ENCODE measurements at regions of chr14 and their contacts with region 1.

Region 1: DNA sequence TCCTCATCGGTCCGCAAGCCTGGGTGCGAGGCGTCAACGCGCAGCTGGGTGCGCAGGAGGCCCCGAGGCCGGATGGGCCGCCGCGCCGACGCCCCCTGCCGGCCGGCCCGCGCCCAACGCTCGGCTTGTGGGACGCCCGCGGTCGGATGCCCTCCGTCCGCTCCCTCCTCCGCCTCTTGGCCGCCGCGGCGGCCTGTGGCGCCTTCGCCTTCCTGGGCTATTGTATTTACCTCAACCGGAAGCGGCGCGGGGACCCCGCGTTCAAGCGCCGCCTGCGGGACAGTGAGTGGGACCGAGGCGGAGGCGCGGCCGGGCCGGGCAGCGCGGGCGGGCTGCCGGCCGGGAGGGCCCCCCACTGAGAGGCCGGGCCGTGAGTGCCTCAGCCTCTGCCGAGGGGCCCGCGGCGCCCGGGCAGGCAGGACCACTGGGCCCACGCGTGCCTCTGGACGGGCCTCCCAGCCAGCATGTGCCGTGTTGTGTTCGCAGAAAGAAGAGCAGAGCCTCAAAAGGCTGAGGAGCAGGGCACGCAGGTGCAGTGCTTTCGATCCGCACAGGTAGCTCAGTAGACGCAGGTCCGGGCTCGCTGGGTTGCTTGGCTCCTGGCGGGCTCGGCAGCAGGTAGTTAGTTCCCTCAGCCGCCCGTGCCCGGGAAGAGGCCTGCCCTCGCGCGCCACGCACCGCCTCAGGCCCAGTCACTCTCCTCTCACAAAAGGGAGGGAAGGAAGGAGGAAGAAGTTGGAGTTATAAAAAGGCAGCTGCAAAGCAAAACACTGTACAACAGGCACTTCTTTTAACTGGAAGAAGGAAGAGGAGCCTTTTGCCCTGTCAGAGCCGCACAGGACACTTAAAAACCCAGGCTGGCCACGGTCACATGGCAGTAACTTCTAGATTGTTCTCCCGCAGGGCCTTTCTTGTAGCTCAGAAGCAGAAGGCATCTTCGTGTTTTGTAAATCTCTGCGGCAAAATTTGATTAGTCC is at the start of gene TOMM20L:
- DNase-seq: peak; percentile 79
- ATAC-seq: peak; percentile 95
- H3K4me3 Mint-ChIP-seq: peak within 1 kb of the TSS; percentile 67
- H3K27ac Mint-ChIP-seq: peak within 1 kb of the TSS; percentile 53
- H3K4me1 Mint-ChIP-seq: peaks cover 8% of the 10 kb centered on the region
- H3K27me3 Mint-ChIP-seq: no peaks in the 10 kb centered on the region
- total RNA-seq, gene TOMM20L: not detected

Region 2: DNA sequence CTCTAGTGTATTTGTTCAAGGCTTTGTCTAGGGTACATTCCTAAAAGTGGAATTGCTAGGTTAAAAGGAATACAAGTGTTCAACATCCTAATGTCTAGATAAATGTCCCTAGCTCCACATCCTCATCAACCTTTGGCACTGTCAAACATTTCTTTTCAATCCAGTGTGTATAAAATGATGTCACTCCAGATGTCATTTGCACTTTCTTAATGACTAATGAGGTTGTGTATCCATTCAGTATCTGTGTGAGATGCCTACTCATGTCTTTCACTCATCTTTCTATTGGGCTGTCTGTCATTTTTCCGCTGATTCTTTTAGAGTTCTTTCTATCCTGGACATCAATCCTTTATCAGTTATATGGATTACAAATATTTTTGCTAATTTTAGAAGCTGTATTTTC is 287.4 kb before region 1 on chr14:
- CTCF ChIA-PET with region 1: interaction called, 10 read pairs
- DNase-seq: no peak
- ATAC-seq: no peak
- H3K4me3 Mint-ChIP-seq: no peak overlapping the region
- H3K27ac Mint-ChIP-seq: no peak overlapping the region
- H3K4me1 Mint-ChIP-seq: peaks cover 5% of the 10 kb centered on the region
- H3K27me3 Mint-ChIP-seq: peaks cover 39% of the 10 kb centered on the region

Region 3: GRCh38 chr14:58408681-58409215 is 12.6 kb after region 1 on chr14:
- CTCF ChIA-PET with region 1: interaction called, 35 read pairs
- DNase-seq: no peak
- ATAC-seq: no peak
- H3K4me3 Mint-ChIP-seq: no peak overlapping the region
- H3K27ac Mint-ChIP-seq: no peak overlapping the region
- H3K4me1 Mint-ChIP-seq: no peaks in the 10 kb centered on the region
- H3K27me3 Mint-ChIP-seq: no peaks in the 10 kb centered on the region

Region 4: GRCh38 chr14:58427281-58428117 is 31.4 kb after region 1 on chr14 and contains the starts of genes KIAA0586 and TIMM9:
- CTCF ChIA-PET with region 1: interaction called, 10 read pairs
- DNase-seq: peak; percentile 98
- ATAC-seq: peak; percentile 91
- H3K4me3 Mint-ChIP-seq: peak within 1 kb of the TSS; percentile 78
- H3K27ac Mint-ChIP-seq: peak within 1 kb of the TSS; percentile 91
- H3K4me1 Mint-ChIP-seq: peaks cover 44% of the 10 kb centered on the region
- H3K27me3 Mint-ChIP-seq: peaks cover 3% of the 10 kb centered on the region
- total RNA-seq, gene KIAA0586: 24.1 to 27.7 TPM
- total RNA-seq, gene TIMM9: 29.4 to 44.3 TPM

Region 5: DNA sequence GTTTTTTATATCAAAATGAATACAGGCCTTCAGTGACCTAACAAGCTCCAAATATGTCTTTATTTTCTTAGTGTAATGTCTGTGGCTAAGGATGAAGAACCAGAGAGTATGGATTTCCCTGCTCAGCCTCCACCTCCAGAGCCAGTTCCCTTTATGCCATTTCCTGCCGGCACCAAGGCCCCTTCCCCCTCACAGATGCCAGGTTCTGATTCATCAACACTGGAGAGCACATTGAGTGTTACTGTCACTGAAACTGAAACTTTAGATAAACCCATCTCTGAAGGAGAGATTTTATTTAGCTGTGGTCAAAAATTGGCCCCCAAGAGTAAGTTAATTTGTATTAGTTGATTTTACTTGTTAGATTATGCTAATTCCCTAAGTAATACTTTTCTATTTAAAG is 92.5 kb after region 1 on chr14:
- CTCF ChIA-PET with region 1: no interaction called
- DNase-seq: peak; percentile 43
- ATAC-seq: no peak
- H3K4me3 Mint-ChIP-seq: no peak overlapping the region
- H3K27ac Mint-ChIP-seq: peak overlapping the region; percentile 58
- H3K4me1 Mint-ChIP-seq: peaks cover 12% of the 10 kb centered on the region
- H3K27me3 Mint-ChIP-seq: no peaks in the 10 kb centered on the region